Head of caudate nucleus (tissue), 42 donors: ENCODE measurements at regions of chr5 and their contacts with region 1.

Region 1: DNA sequence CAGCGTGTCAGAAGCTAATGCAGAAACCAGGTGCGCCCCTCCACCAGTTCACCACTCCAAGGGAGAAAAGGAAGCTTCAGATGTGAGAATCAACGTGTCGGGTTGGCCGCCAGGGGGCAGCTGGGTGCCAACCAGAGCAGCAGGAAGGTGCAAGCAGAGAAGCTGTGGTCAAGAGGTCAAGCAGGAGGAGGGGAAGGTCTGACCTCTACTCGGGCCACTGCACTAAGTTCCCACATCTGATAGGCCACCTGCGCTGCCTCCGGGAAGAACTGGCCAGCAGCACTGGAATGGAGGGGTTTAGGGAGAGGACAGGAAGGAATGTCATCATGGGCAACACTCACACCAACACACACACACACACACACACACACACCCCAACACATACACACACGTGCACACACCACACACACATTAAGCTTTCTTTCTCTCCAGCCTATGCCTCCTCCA is 31.4 kb downstream of the ANXA6 start:
- DNase-seq: peak; percentile 52 to 89 (median 80)

Region 2: DNA sequence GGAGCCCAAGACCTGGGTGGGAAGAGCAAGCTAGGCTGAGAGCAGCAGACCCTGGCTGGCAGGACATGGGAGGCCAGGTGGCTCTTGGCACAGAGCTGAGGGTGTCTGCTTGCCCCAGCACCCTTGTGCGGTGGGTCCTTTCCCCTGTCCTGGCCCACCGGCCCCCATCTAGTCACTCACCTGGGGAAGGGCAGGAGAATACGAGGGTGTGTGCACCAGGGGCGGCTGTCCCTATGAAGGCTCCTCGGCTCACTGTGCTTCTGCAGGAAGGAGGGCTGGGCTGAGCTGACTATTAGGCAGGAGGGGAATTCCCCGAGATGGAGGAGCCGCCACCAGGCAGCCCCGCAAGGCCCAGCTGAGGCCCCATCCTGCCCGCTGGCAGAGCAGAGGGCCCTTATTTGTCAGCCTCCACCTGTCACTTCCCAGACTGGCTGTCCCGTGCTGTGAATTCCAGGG is 39.3 kb before region 1 on chr5:
- intact Hi-C with region 1: no loop called
- DNase-seq: no peak

Region 3: GRCh38 chr5:151164686-151165392 is 38.6 kb after region 1 on chr5:
- intact Hi-C with region 1: loop called (anchors 5 kb)
- DNase-seq: peak; percentile 39 to 92 (median 81)

Region 4: GRCh38 chr5:151183451-151184245 is 57.4 kb after region 1 on chr5:
- intact Hi-C with region 1: no loop called
- DNase-seq: peak in 2 of 42 donors; percentile 16 to 38

Region 5: GRCh38 chr5:151213800-151214613 is 87.8 kb after region 1 on chr5:
- intact Hi-C with region 1: no loop called
- DNase-seq: peak in 36 of 42 donors; percentile 9 to 71 (median 38)